ENCODE measurements at regions of chr17 and their contacts with region 1.

Region 1: GRCh38 chr17:35612924-35613521 is 25.9 kb downstream of the AP2B1 start:
- ATAC-seq: peak in 3 of 8 experiments; percentile 45 to 50 (median 48)
- H3K4me3 ChIP-seq: no peak overlapping the region
- H3K27ac ChIP-seq: no peak overlapping the region
- H3K4me1 ChIP-seq: no peaks in the 10 kb centered on the region

Region 2: GRCh38 chr17:35747540-35748017 is 134.6 kb after region 1 on chr17:
- in situ Hi-C with region 1: loop called in 3 of 9 experiments (anchors 25 kb)
- ATAC-seq: peak; percentile 77 to 90 (median 86)
- H3K4me3 ChIP-seq: no peak overlapping the region
- H3K27ac ChIP-seq: no peak overlapping the region
- H3K4me1 ChIP-seq: peaks cover 0 to 9% of the 10 kb centered on the region in 2 donors